ENCODE measurements at regions of chr1 and their contacts with region 1.

Region 1: GRCh38 chr1:154558575-154559465 is at the start of gene UBE2Q1:
- DNase-seq: peak; percentile 97
- ATAC-seq: peak; percentile 97
- H3K4me3 ChIP-seq: peak within 1 kb of the TSS; percentile 88
- H3K27ac ChIP-seq: peak within 1 kb of the TSS; percentile 88
- H3K4me1 ChIP-seq: peaks cover 4% of the 10 kb centered on the region
- H3K27me3 ChIP-seq: no peaks in the 10 kb centered on the region
- CTCF ChIP-seq: no peak
- EP300 ChIP-seq: no peak; a peak in 1 of 4 replicates
- POLR2A ChIP-seq: peak; percentile 77
- RAD21 ChIP-seq: no peak
- polyA plus RNA-seq, gene UBE2Q1: 11.0 to 20.3 TPM

Region 2: GRCh38 chr1:154546264-154547063 is 12.4 kb before region 1 on chr1:
- CTCF ChIA-PET with region 1: interaction called, 22 read pairs
- POLR2A ChIA-PET with region 1: no interaction called
- RAD21 ChIA-PET with region 1: interaction called, 3 read pairs
- SMC1A ChIA-PET with region 1: interaction called, 15 read pairs
- in situ Hi-C with region 1: no loop called
- intact Hi-C with region 1: no loop called
- DNase-seq: peak; percentile 13
- ATAC-seq: peak; percentile 87
- H3K4me3 ChIP-seq: no peak overlapping the region
- H3K27ac ChIP-seq: no peak overlapping the region
- H3K4me1 ChIP-seq: peaks cover 15% of the 10 kb centered on the region
- H3K27me3 ChIP-seq: no peaks in the 10 kb centered on the region; a peak in 1 of 4 replicates
- CTCF ChIP-seq: peak; percentile 72 to 86 (median 84)
- EP300 ChIP-seq: no peak
- POLR2A ChIP-seq: no peak
- RAD21 ChIP-seq: peak; percentile 98

Region 3: GRCh38 chr1:154607609-154608396 is 49.0 kb after region 1 on chr1 and contains the start of gene ADAR:
- CTCF ChIA-PET with region 1: interaction called, 12 read pairs
- POLR2A ChIA-PET with region 1: interaction called, 10 read pairs
- RAD21 ChIA-PET with region 1: interaction called, 13 read pairs
- SMC1A ChIA-PET with region 1: interaction called, 15 read pairs
- in situ Hi-C with region 1: no loop called
- intact Hi-C with region 1: loop called (anchors 2 kb)
- DNase-seq: peak; percentile 89
- ATAC-seq: peak; percentile 74
- H3K4me3 ChIP-seq: peak within 1 kb of the TSS; percentile 80
- H3K27ac ChIP-seq: peak within 1 kb of the TSS; percentile 100
- H3K4me1 ChIP-seq: peaks cover 47% of the 10 kb centered on the region
- H3K27me3 ChIP-seq: no peaks in the 10 kb centered on the region
- CTCF ChIP-seq: 0 out of 6 replicates have a peak, but pooled peaks of 2 of the 3 experiments have one; percentile 4 to 5
- EP300 ChIP-seq: 0 out of 4 replicates have a peak, but pooled peaks of 1 of the 2 experiments have one; percentile 16
- POLR2A ChIP-seq: peak; percentile 84
- RAD21 ChIP-seq: no peak
- polyA plus RNA-seq, gene ADAR: 55.5 to 105 TPM

Region 4: DNA sequence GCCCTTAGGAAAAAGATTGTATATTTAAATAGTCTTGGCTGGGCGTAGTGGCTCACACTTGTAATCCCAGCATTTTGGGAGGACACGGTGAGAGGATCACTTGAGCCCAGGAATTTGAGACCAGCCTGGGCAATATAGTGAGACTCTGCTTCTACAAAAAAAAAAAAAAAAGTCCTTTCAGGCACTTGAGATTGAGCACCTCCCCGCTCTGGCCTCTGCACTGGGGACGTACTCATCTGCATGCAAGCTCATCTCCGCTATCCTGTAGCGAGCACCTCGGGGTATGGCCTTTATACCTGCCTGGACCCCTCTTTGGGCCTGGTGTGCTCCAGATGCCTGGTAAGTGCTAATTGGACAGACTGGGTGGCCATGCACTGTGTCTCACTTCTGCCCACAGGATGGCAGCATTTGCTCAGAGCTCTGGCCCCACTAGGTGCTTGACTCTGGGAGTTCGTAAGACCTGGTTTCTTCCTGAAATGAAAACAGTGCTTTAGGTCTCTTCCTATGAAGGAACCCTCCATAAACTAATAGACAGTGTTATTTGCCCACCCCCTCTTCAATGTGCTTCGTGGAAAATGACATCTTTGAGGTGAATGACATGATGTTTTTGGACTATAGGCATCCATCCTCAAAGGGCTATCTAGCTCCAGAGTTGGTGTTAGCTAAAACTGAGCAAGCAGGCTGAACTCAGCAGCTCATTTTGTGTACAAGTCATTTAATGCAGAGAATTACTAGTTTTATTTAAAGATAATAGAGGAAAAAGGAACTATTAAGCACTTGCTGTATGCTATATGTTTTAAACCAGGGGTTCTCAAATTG is 110.9 kb after region 1 on chr1:
- CTCF ChIA-PET with region 1: interaction called, 31 read pairs
- POLR2A ChIA-PET with region 1: interaction called, 3 read pairs
- RAD21 ChIA-PET with region 1: interaction called, 20 read pairs
- SMC1A ChIA-PET with region 1: interaction called, 21 read pairs
- in situ Hi-C with region 1: no loop called
- intact Hi-C with region 1: loop called (anchors 1 kb)
- DNase-seq: peak; percentile 67
- ATAC-seq: peak; percentile 100
- H3K4me3 ChIP-seq: no peak overlapping the region
- H3K27ac ChIP-seq: no peak overlapping the region
- H3K4me1 ChIP-seq: no peaks in the 10 kb centered on the region
- H3K27me3 ChIP-seq: no peaks in the 10 kb centered on the region
- CTCF ChIP-seq: peak; percentile 90 to 96 (median 93); a peak in 5 of 6 replicates
- EP300 ChIP-seq: no peak
- POLR2A ChIP-seq: no peak
- RAD21 ChIP-seq: peak; percentile 98

Region 5: DNA sequence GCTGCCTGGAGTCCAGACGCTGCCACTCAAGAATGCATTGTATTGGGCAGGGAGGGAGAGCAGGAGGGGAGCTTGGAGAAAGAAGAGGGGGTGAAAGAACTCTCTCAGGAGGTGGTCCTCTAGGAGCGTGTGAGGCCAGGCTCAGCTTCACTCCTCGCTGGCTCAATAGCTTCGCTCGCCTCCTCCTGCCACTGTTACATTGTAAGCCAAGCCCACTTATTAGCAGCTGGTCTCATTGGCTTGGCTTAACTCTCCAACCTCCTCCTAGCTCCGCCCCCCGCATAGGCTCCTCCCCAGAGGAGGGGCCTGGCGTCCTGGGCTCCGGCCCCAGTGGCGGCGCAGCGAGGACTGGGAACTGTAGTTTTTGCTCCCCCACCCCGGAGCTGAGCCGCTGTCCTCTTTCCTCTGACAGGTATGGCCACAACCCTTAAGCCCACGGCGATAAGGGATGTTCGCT is 311.3 kb after region 1 on chr1 and contains the start of gene KCNN3:
- CTCF ChIA-PET with region 1: interaction called, 64 read pairs
- POLR2A ChIA-PET with region 1: interaction called, 3 read pairs
- RAD21 ChIA-PET with region 1: interaction called, 15 read pairs
- SMC1A ChIA-PET with region 1: interaction called, 45 read pairs
- in situ Hi-C with region 1: no loop called
- intact Hi-C with region 1: no loop called
- DNase-seq: peak; percentile 82
- ATAC-seq: peak; percentile 89
- H3K4me3 ChIP-seq: peak within 1 kb of the TSS; percentile 88
- H3K27ac ChIP-seq: peak within 1 kb of the TSS; percentile 46
- H3K4me1 ChIP-seq: peaks cover 58% of the 10 kb centered on the region
- H3K27me3 ChIP-seq: no peaks in the 10 kb centered on the region
- CTCF ChIP-seq: no peak
- EP300 ChIP-seq: no peak
- POLR2A ChIP-seq: peak; percentile 89
- RAD21 ChIP-seq: no peak
- polyA plus RNA-seq, gene KCNN3: 3.5 to 6.4 TPM

Region 6: DNA sequence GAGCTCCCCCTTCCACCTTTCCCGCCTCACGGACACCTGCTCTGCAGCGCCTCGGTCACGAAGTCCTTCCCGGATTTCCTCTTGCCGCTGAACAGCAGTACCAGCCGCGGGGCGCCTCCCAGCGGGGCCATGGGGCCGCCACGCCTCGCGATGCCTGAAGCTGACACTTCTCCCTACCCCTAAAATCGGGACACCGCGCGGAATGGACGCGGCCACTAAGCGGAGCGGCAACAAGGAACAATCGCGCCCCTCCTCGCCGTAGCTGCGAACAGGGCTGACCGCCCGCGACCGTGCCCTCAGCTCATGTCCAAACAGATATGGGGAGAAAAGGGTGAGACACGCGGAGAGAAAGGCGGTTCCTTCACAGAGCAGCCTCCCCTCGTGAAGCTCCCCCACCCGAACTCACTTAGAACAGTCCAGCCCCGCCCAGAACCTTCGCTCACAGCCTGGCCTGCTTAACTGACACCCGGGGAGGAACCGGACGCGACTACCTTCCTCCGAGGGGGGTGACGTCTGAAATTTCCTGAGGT is 377.8 kb after region 1 on chr1 and contains the start of gene PMVK:
- CTCF ChIA-PET with region 1: interaction called, 20 read pairs
- POLR2A ChIA-PET with region 1: interaction called, 4 read pairs
- RAD21 ChIA-PET with region 1: interaction called, 12 read pairs
- SMC1A ChIA-PET with region 1: interaction called, 4 read pairs
- in situ Hi-C with region 1: no loop called
- intact Hi-C with region 1: no loop called
- DNase-seq: peak; percentile 84
- ATAC-seq: peak; percentile 79
- H3K4me3 ChIP-seq: peak within 1 kb of the TSS; percentile 87
- H3K27ac ChIP-seq: peak within 1 kb of the TSS; percentile 100
- H3K4me1 ChIP-seq: peaks cover 38% of the 10 kb centered on the region
- H3K27me3 ChIP-seq: no peaks in the 10 kb centered on the region
- CTCF ChIP-seq: peak; percentile 24 to 47 (median 41); a peak in 4 of 6 replicates
- EP300 ChIP-seq: peak; percentile 23 to 37; a peak in 3 of 4 replicates
- POLR2A ChIP-seq: peak; percentile 95
- RAD21 ChIP-seq: peak; percentile 7; the same call in 1 of the 2 replicates
- polyA plus RNA-seq, gene PMVK: 6.0 to 28.8 TPM

Region 7: GRCh38 chr1:155084722-155085503 is 526.1 kb after region 1 on chr1:
- CTCF ChIA-PET with region 1: interaction called, 15 read pairs
- POLR2A ChIA-PET with region 1: no interaction called
- RAD21 ChIA-PET with region 1: interaction called, 5 read pairs
- SMC1A ChIA-PET with region 1: no interaction called
- in situ Hi-C with region 1: no loop called
- intact Hi-C with region 1: loop called (anchors 2 kb)
- DNase-seq: peak; percentile 72
- ATAC-seq: peak; percentile 90
- H3K4me3 ChIP-seq: peak overlapping the region; percentile 72
- H3K27ac ChIP-seq: peak overlapping the region; percentile 72
- H3K4me1 ChIP-seq: peaks cover 33% of the 10 kb centered on the region
- H3K27me3 ChIP-seq: peaks cover 17 to 23% of the 10 kb centered on the region in 2 experiments
- CTCF ChIP-seq: peak; percentile 90 to 99 (median 95)
- EP300 ChIP-seq: 0 out of 4 replicates have a peak, but pooled peaks of 1 of the 2 experiments have one; percentile 48
- POLR2A ChIP-seq: no peak; the same call in 1 of the 2 replicates
- RAD21 ChIP-seq: peak; percentile 99

Region 8: DNA sequence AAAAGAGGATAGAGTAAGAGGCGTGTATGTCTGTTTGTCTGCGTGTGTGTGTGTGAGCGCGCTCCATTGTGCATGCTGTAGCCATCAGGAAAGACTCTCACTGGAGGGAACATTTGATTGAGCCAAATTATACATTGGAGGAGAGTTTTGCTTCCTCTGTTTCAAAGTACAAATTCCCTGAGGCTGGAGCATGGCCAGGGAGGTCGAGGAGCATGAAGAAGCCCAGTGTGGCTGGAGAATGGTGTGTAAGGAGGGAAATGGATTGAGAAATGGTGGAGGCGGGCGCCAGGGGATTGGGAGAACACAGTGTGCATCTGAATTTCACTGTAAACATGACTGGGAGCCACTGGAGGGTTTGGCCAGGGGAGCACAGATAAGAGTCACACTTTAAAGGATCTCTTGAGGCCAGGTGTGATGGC is 546.8 kb after region 1 on chr1:
- CTCF ChIA-PET with region 1: no interaction called
- POLR2A ChIA-PET with region 1: no interaction called
- RAD21 ChIA-PET with region 1: no interaction called
- SMC1A ChIA-PET with region 1: no interaction called
- in situ Hi-C with region 1: no loop called
- intact Hi-C with region 1: no loop called
- DNase-seq: no peak
- ATAC-seq: no peak
- H3K4me3 ChIP-seq: no peak overlapping the region
- H3K27ac ChIP-seq: no peak overlapping the region
- H3K4me1 ChIP-seq: no peaks in the 10 kb centered on the region
- H3K27me3 ChIP-seq: no peaks in the 10 kb centered on the region
- CTCF ChIP-seq: no peak
- EP300 ChIP-seq: no peak
- POLR2A ChIP-seq: no peak
- RAD21 ChIP-seq: no peak